ENCODE measurements at regions of chr17 and their contacts with region 1.

Region 1: GRCh38 chr17:18260332-18261144 is at the start of gene MIEF2:
- DNase-seq: peak; percentile 91 to 94
- H3K4me3 ChIP-seq: peak within 1 kb of the TSS; percentile 76 to 88 (median 84)
- H3K27ac ChIP-seq: peak within 1 kb of the TSS; percentile 90; the same call in 1 of the 2 replicates
- H3K4me1 ChIP-seq: peaks cover 4 to 37% (median 20%) of the 10 kb centered on the region in 4 experiments
- H3K27me3 ChIP-seq: no peaks in the 10 kb centered on the region
- CTCF ChIP-seq: no peak
- EP300 ChIP-seq: peak in 1 of 2 experiments; percentile 23; a peak in 1 of 3 replicates
- POLR2A ChIP-seq: peak in 1 of 2 experiments; percentile 91; a peak in 2 of 3 replicates
- RAD21 ChIP-seq: no peak
- total RNA-seq, gene MIEF2: 9.9 and 12.4 TPM in 2 replicates

Region 2: DNA sequence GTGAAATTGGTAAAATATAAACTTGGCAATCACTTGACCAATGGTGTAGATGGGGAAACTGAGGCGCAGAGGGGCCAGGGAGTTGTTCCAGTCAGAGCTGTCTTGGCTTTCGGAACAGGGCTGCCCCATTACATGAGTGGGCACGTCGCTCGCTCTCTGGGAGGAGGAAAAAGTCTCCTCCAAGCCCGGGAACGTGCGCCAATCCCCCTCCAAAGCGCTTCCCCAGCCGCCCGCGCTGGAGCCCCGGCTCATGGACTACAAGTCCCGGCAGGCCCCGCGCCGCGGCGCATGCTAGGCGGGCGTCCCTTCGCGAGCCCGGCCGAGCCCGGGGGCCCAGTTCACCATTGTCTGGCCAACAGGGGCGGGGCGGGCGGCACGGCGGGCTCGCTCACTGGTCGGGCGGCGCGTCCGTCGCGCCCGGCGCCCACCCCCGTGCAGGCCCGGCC is 35.4 kb before region 1 on chr17:
- CTCF ChIA-PET with region 1: interaction called, 4 read pairs
- POLR2A ChIA-PET with region 1: interaction called, 14 read pairs
- DNase-seq: peak; percentile 85 to 96
- H3K4me3 ChIP-seq: peak overlapping the region; percentile 70 to 98 (median 79)
- H3K27ac ChIP-seq: peak overlapping the region; percentile 97
- H3K4me1 ChIP-seq: peaks cover 0 to 18% (median 10%) of the 10 kb centered on the region in 4 experiments; a peak in 6 of 7 replicates
- H3K27me3 ChIP-seq: no peaks in the 10 kb centered on the region
- CTCF ChIP-seq: no peak
- EP300 ChIP-seq: no peak
- POLR2A ChIP-seq: no peak
- RAD21 ChIP-seq: no peak

Region 3: DNA sequence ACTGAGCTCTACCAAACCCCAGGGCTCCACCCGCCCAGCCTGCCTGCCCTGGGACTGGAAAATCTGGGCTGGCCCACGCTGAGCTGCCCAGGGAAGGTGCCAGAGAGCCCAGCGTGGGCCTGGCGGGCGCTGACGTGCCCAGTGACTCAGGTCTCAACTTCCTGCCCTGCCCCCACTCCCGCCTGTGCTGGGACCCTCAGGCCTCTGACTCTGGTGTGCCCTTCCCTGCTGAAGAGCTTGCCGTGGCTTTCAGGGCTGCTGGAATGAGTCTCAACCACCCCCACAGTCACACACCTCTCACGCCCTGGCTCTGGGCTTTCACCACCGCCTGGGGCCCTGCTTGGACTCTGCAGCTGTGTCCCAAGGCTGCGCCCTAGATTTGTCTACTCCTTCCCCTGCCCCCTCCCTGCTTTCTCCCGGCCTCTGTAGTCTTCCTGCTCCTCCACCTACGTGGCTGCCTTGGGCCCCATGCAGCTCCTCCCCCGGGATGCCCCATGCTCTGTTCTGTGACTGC is 24.7 kb before region 1 on chr17:
- CTCF ChIA-PET with region 1: interaction called, 4 read pairs
- POLR2A ChIA-PET with region 1: interaction called, 171 read pairs
- DNase-seq: no peak
- H3K4me3 ChIP-seq: no peak overlapping the region
- H3K27ac ChIP-seq: no peak overlapping the region
- H3K4me1 ChIP-seq: peaks cover 0 to 4% (median 0%) of the 10 kb centered on the region in 4 experiments; a peak in 1 of 7 replicates
- H3K27me3 ChIP-seq: peaks cover 0 to 2% (median 0%) of the 10 kb centered on the region in 4 experiments; a peak in 1 of 7 replicates
- CTCF ChIP-seq: no peak
- EP300 ChIP-seq: no peak
- POLR2A ChIP-seq: no peak
- RAD21 ChIP-seq: no peak

Region 4: DNA sequence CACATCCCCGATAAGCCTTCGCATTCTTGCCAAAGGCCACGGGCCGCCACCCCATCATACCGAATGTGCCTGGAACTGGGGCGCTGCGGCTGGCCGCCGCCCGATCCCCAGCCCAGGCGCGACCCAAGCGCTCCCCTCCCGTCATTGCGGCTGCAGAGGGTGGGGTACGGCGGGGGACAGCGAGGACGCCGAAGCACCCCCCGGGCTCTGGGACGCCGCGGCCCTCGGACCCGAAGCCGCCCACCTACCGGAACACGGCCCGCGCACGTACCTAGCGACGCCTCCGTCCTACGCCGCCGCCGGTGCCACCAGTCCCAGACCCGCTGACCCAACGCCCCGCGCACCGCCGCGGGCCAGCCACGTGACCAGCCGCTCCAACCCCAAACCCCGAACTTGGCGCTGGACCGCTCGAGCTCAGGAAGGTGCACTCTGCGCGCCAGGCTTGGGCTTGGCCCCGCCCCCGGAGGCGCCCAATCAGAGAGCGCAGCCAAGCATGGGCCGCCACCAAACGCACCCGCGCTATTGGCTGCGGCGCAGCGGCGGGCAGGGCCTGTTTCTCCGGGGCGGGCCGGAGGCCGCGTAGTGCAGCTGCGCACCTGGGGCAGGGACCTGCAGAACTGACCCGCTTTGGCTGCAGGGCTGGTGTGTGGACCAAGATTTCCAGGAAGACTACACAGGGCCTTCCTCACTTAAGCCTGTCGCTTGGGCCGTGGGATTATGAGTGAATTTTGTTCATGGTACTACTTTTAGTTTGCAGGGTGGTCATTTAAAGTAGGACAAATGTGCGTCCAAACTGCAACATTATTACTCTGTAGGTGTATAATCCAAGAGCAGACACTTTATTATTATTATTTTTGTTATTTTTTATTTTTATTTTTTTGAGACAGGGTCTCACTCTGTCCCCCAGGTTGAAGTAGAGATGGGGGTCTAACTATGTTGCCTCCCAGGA is 102.8 kb after region 1 on chr17 and contains the start of gene SHMT1:
- CTCF ChIA-PET with region 1: no interaction called
- POLR2A ChIA-PET with region 1: interaction called, 13 read pairs
- DNase-seq: peak; percentile 92 to 96
- H3K4me3 ChIP-seq: peak within 1 kb of the TSS; percentile 84 to 94 (median 88)
- H3K27ac ChIP-seq: no peak within 1 kb of the TSS; the same call in 1 of the 2 replicates
- H3K4me1 ChIP-seq: peaks cover 0 to 2% (median 0%) of the 10 kb centered on the region in 4 experiments; a peak in 1 of 7 replicates
- H3K27me3 ChIP-seq: no peaks in the 10 kb centered on the region
- CTCF ChIP-seq: 0 out of 4 replicates have a peak, but pooled peaks of 1 of the 3 experiments have one; percentile 3
- EP300 ChIP-seq: no peak
- POLR2A ChIP-seq: peak; percentile 78 to 85
- RAD21 ChIP-seq: peak; percentile 0 to 6; a peak in 1 of 4 replicates
- total RNA-seq, gene SHMT1: 38.0 and 39.3 TPM in 2 replicates

Measured in H1 (cell line).